ENCODE measurements at regions of chr5 and their contacts with region 1.

Region 1: DNA sequence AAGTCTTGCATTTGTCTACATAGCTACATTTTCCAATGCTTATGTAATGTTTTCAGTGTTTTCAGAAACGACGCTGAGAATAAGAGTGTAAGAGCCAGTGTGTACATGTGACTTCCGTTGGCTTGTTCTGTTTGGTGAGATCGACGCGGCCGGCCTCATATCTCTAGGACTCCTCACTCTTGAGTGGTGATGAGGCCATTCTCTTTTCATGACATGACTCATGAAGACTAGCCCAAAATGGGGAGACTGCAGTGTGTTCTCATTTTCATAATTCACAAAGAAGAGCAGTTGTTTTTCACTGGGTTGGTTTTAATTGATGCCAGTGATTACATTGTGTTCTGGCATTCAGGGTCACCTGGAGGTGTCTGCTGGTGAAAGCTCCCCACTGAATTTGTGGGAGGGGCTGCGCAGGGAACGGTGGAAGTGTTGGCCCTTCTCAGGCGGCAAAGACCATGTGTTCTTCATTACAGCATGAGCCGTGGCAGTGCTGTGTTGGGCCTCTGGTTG is 131.5 kb upstream of the OTULINL start:
- DNase-seq: peak in 4 of 5 donors; percentile 53 to 75 (median 62)
- H3K4me3 ChIP-seq: no peak overlapping the region
- H3K27ac ChIP-seq: peak overlapping the region in 1 of 2 donors; percentile 76
- H3K4me1 ChIP-seq: peaks cover 19% of the 10 kb centered on the region
- H3K27me3 ChIP-seq: no peaks in the 10 kb centered on the region
- CTCF ChIP-seq: no peak
- EP300 ChIP-seq: no peak
- POLR2A ChIP-seq: no peak

Region 2: GRCh38 chr5:14405267-14405666 is 44.8 kb before region 1 on chr5:
- intact Hi-C with region 1: loop called in 2 of 4 experiments (anchors 5 to 10 kb)
- DNase-seq: no peak
- H3K4me3 ChIP-seq: no peak overlapping the region
- H3K27ac ChIP-seq: no peak overlapping the region
- H3K4me1 ChIP-seq: peaks cover 17% of the 10 kb centered on the region
- H3K27me3 ChIP-seq: no peaks in the 10 kb centered on the region
- CTCF ChIP-seq: no peak
- EP300 ChIP-seq: no peak
- POLR2A ChIP-seq: no peak

Region 3: DNA sequence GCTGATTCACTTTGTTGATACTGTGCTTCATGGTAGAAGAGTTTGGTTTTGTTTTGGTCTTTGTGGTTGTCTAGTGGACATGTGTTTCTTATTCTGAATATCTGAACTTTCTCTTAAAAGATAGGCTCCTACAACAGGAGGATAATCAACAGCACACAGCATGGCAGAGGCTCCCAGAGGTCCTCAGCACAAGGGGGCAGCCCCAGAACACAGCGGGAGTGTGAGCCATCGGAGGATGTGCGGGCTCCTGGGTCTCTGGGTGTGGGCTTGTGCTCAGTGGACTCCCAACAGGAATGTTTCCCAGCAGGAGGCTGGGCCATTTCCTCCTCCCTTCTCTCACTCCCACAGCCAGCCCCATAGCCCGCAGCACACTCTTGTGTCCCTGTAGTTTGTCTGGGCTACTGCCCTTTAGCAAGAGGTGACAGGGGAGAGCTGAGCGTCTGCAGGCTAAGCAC is 32.8 kb before region 1 on chr5:
- intact Hi-C with region 1: no loop called
- DNase-seq: peak in 2 of 5 donors; percentile 38 to 40
- H3K4me3 ChIP-seq: no peak overlapping the region
- H3K27ac ChIP-seq: peak overlapping the region in 1 of 2 donors; percentile 52
- H3K4me1 ChIP-seq: peaks cover 15% of the 10 kb centered on the region
- H3K27me3 ChIP-seq: no peaks in the 10 kb centered on the region
- CTCF ChIP-seq: no peak
- EP300 ChIP-seq: no peak
- POLR2A ChIP-seq: no peak

Measured in ovary (tissue), 10 donors.